ENCODE measurements at regions of chr7 and their contacts with region 1.

Region 1: GRCh38 chr7:150378853-150379440 is at the start of gene ZNF775:
- DNase-seq: peak; percentile 100
- H3K4me3 ChIP-seq: peak within 1 kb of the TSS; percentile 61 to 99
- H3K27ac ChIP-seq: peak within 1 kb of the TSS; percentile 74 to 90
- H3K4me1 ChIP-seq: peaks cover 0 to 43% of the 10 kb centered on the region in 2 experiments; a peak in 2 of 4 replicates
- H3K27me3 ChIP-seq: no peaks in the 10 kb centered on the region
- CTCF ChIP-seq: no peak
- EP300 ChIP-seq: no peak
- RAD21 ChIP-seq: no peak
- polyA plus RNA-seq, gene ZNF775: 4.6 and 5.0 TPM in 2 replicates

Region 2: GRCh38 chr7:150368096-150368883 is 10.7 kb before region 1 on chr7 and contains the start of gene REPIN1:
- CTCF ChIA-PET with region 1: interaction called, 15 read pairs
- POLR2A ChIA-PET with region 1: interaction called, 43 read pairs
- DNase-seq: peak; percentile 99
- H3K4me3 ChIP-seq: peak within 1 kb of the TSS; percentile 70 to 77
- H3K27ac ChIP-seq: peak within 1 kb of the TSS; percentile 72 to 96
- H3K4me1 ChIP-seq: peaks cover 19 to 32% of the 10 kb centered on the region in 2 experiments
- H3K27me3 ChIP-seq: no peaks in the 10 kb centered on the region
- CTCF ChIP-seq: no peak
- EP300 ChIP-seq: peak in 1 of 2 experiments; percentile 57; a peak in 3 of 4 replicates
- RAD21 ChIP-seq: peak; percentile 4; the same call in 1 of the 2 replicates
- polyA plus RNA-seq, gene REPIN1: 87.5 and 91.6 TPM in 2 replicates